ENCODE measurements at regions of chr3 and their contacts with region 1.

Region 1: GRCh38 chr3:167882067-167882667 is 146.6 kb downstream of the SERPINI1 start:
- DNase-seq: no peak
- H3K4me3 ChIP-seq: no peak overlapping the region
- H3K27ac ChIP-seq: no peak overlapping the region
- H3K4me1 ChIP-seq: peaks cover 0 to 7% (median under 1%) of the 10 kb centered on the region in 4 donors
- H3K27me3 ChIP-seq: no peaks in the 10 kb centered on the region
- CTCF ChIP-seq: peak; percentile 12 to 56 (median 42)
- EP300 ChIP-seq: no peak
- POLR2A ChIP-seq: no peak

Region 2: GRCh38 chr3:167380004-167380689 is 502.0 kb before region 1 on chr3 and contains the start of gene ZBBX:
- intact Hi-C with region 1: loop called (anchors 5 kb)
- DNase-seq: peak; percentile 78
- H3K4me3 ChIP-seq: peak within 1 kb of the TSS; percentile 2 to 48 (median 39)
- H3K27ac ChIP-seq: no peak within 1 kb of the TSS
- H3K4me1 ChIP-seq: peaks cover 0 to 9% (median 7%) of the 10 kb centered on the region in 4 donors
- H3K27me3 ChIP-seq: no peaks in the 10 kb centered on the region
- CTCF ChIP-seq: peak; percentile 65 to 81 (median 75)
- EP300 ChIP-seq: no peak
- POLR2A ChIP-seq: no peak
- total RNA-seq, gene ZBBX: not detected

Region 3: DNA sequence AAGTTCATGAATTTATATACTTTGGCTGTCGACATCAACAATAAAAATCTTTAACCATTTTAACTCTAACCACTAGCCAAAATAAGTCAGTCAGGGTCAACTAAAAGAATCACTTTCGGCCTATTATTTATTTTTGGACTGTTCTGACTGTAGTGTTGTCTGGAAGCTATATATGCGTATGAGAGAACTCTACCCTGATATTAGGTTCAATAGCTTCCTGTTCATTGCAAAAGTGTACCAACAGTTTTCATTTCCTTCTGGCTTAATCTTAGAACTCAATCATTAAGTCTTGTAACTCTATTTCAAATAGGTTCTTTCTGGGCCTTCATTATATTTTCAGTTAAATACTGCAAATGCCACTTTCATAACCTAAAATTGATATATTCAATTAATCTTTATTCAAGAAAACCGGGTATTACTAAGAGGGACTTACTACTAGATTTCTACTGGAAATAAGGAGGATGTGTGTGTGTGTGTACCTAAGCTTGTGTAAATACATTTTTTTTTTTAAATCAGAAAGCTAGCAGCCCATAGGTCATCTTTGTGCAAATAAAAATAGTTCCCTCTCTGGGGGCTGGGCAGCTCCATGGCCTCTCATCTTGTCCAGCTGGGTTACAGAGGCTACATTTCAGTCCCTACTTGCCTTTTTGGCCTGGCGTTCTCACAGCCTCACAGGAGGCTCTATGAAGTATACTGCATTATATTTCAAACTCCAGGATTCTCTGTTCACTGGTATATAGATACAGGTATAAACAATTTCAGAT is 414.1 kb before region 1 on chr3:
- intact Hi-C with region 1: no loop called
- DNase-seq: no peak
- H3K4me3 ChIP-seq: no peak overlapping the region
- H3K27ac ChIP-seq: no peak overlapping the region
- H3K4me1 ChIP-seq: no peaks in the 10 kb centered on the region
- H3K27me3 ChIP-seq: no peaks in the 10 kb centered on the region
- CTCF ChIP-seq: no peak
- EP300 ChIP-seq: no peak
- POLR2A ChIP-seq: no peak

Region 4: GRCh38 chr3:167837466-167837865 is 44.7 kb before region 1 on chr3:
- intact Hi-C with region 1: loop called (anchors 2 kb)
- DNase-seq: no peak
- H3K4me3 ChIP-seq: no peak overlapping the region
- H3K27ac ChIP-seq: no peak overlapping the region
- H3K4me1 ChIP-seq: no peaks in the 10 kb centered on the region
- H3K27me3 ChIP-seq: no peaks in the 10 kb centered on the region
- CTCF ChIP-seq: no peak
- EP300 ChIP-seq: no peak
- POLR2A ChIP-seq: no peak

Region 5: DNA sequence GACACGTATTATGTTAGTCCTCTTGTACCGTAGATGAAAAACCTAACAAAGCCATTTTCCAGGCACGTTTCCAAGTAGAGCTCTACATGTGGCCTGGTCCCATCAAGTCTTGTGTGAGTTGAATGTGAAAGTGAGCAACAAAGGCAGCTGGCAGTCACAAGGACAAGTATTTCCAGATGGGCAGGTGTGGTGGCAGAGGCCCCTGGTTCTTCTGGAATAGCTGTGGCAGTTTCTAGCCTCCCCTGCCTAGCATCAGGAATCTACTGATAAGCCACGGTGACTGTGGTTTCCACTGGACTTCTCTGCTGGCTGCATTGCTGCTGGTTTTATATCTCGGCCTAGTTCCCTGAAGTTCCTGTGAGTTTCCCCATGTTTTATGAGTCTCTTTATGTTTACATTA is 95.9 kb after region 1 on chr3:
- intact Hi-C with region 1: no loop called
- DNase-seq: no peak
- H3K4me3 ChIP-seq: no peak overlapping the region
- H3K27ac ChIP-seq: no peak overlapping the region
- H3K4me1 ChIP-seq: no peaks in the 10 kb centered on the region
- H3K27me3 ChIP-seq: no peaks in the 10 kb centered on the region
- CTCF ChIP-seq: no peak
- EP300 ChIP-seq: no peak
- POLR2A ChIP-seq: no peak

Measured in sigmoid colon (tissue), 7 donors.